AG04449 (cell line): ENCODE measurements at regions of chr11 and their contacts with region 1.

Region 1: GRCh38 chr11:44611687-44612434 is 46.4 kb downstream of the CD82 start:
- DNase-seq: no peak
- H3K4me3 ChIP-seq: no peak overlapping the region
- CTCF ChIP-seq: no peak

Region 2: GRCh38 chr11:44601471-44602370 is 10.1 kb before region 1 on chr11:
- CTCF ChIA-PET with region 1: interaction called, 20 read pairs
- POLR2A ChIA-PET with region 1: no interaction called
- DNase-seq: no peak
- H3K4me3 ChIP-seq: no peak overlapping the region
- CTCF ChIP-seq: no peak